CD4-positive, alpha-beta T cell (primary cell): ENCODE measurements at regions of chr6 and their contacts with region 1.

Region 1: DNA sequence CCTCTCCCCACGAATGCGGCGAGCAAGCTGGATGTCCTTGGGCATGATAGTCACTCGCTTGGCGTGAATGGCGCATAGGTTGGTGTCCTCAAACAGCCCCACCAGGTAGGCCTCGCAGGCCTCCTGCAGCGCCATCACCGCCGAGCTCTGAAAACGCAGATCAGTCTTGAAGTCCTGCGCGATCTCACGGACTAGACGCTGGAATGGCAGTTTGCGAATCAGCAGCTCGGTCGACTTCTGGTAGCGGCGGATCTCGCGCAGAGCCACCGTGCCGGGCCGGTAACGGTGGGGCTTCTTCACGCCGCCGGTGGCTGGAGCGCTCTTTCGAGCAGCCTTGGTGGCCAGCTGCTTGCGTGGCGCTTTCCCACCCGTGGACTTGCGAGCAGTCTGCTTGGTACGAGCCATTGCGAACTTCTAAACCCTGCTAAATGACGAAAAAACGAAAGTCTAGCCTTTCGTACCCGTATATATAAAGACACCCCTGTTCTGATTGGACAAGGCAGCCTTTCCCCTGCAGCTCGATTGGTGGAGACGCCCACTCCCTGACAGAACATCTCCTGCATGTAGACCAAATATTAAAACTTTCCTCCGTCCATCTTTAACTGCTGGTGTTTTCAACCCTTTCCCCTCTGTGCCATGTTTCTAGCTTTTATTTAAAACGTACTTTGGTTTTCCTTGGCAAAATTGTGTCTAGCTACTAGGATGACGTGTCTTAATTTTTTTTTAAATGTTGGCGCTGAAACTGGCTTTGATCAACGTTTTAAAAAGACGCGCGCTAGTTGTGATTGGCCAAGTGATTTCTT is 109.8 kb downstream of the HFE start:
- DNase-seq: peak; percentile 60 to 97 (median 70)
- ATAC-seq: peak; percentile 55
- H3K4me3 ChIP-seq: peak overlapping the region; percentile 75
- H3K4me3 Mint-ChIP-seq: peak overlapping the region; percentile 94
- H3K27ac ChIP-seq: peak overlapping the region; percentile 81 to 87
- H3K27ac Mint-ChIP-seq: peak overlapping the region; percentile 97
- H3K4me1 ChIP-seq: peaks cover 26% of the 10 kb centered on the region
- H3K4me1 Mint-ChIP-seq: peaks cover 57% of the 10 kb centered on the region
- H3K27me3 ChIP-seq: no peaks in the 10 kb centered on the region
- H3K27me3 Mint-ChIP-seq: no peaks in the 10 kb centered on the region
- CTCF ChIP-seq: no peak

Region 2: GRCh38 chr6:24344980-24345379 is 1852.1 kb before region 1 on chr6:
- CTCF ChIA-PET with region 1: no interaction called
- POLR2A ChIA-PET with region 1: no interaction called
- intact Hi-C with region 1: no loop called
- DNase-seq: no peak
- ATAC-seq: no peak
- H3K4me3 ChIP-seq: no peak overlapping the region
- H3K4me3 Mint-ChIP-seq: no peak overlapping the region
- H3K27ac ChIP-seq: no peak overlapping the region
- H3K27ac Mint-ChIP-seq: no peak overlapping the region
- H3K4me1 ChIP-seq: no peaks in the 10 kb centered on the region
- H3K4me1 Mint-ChIP-seq: no peaks in the 10 kb centered on the region
- H3K27me3 ChIP-seq: peaks cover 5 to 9% of the 10 kb centered on the region in 2 experiments
- H3K27me3 Mint-ChIP-seq: peaks cover 51% of the 10 kb centered on the region
- CTCF ChIP-seq: no peak

Region 3: DNA sequence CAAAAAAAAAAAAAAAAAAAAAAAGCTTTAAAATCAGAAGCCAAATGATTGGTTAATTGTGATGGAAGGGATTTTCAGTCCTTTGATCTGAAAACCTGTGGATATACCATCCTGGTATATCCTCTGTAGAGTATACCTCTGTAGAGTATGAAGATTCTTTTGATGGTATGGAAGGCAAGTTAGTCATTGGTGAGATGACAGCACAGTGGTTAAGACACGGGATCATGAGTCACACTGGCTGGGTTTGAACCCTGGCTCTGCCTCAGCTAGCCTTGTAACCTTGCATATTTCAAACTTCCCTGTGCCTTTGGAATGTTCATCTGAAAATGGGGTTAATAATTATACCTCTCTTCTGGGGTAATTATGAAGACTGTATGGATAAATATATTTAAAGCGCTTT is 738.6 kb before region 1 on chr6:
- CTCF ChIA-PET with region 1: no interaction called
- POLR2A ChIA-PET with region 1: no interaction called
- intact Hi-C with region 1: no loop called
- DNase-seq: peak in 3 of 14 experiments; percentile 4 to 36 (median 32)
- ATAC-seq: no peak
- H3K4me3 ChIP-seq: no peak overlapping the region
- H3K4me3 Mint-ChIP-seq: no peak overlapping the region
- H3K27ac ChIP-seq: no peak overlapping the region
- H3K27ac Mint-ChIP-seq: no peak overlapping the region
- H3K4me1 ChIP-seq: no peaks in the 10 kb centered on the region
- H3K4me1 Mint-ChIP-seq: no peaks in the 10 kb centered on the region
- H3K27me3 ChIP-seq: no peaks in the 10 kb centered on the region
- H3K27me3 Mint-ChIP-seq: no peaks in the 10 kb centered on the region
- CTCF ChIP-seq: no peak

Region 4: DNA sequence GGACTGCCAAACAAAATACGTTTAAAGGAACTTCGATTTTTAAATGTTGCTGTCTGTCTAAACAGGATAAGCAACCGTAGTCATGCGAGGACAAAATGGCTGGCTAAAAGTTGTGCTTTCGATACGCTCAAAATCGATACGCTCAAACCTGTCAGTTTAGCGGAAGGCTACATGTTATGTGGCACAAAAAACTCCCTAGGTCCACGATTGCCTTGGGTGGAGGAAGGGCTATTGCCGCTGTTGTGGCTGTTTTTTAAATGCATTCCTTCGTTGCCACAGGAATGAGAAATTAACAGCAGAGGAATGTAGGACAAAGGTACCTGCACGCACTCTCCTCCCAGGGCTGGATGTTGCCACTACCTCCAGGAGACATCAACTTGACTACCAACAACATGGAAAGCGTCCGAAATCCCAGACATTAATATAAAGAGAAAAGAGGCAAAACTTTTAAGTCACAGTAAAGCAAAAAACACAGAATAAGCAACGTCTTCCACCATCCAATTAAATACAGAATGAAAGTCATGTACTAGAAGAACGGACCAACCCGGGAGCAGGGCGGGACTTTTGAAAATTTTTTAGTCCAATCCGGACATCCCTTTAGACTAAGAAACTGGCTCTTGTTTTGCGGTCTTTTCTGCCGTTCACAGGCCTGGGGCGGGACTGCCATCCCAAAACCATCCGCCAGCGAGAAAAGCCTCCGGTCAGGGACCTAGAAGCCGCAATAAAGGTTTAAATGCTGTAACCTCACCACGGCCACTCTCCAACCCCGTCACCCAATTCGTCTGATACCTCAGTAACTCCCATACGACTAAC is 142.0 kb before region 1 on chr6:
- CTCF ChIA-PET with region 1: no interaction called
- POLR2A ChIA-PET with region 1: interaction called, 103 read pairs
- intact Hi-C with region 1: loop called in 1 of 2 experiments (anchors 5 kb)
- DNase-seq: peak; percentile 68 to 97 (median 80)
- ATAC-seq: peak; percentile 71
- H3K4me3 ChIP-seq: peak overlapping the region; percentile 89
- H3K4me3 Mint-ChIP-seq: peak overlapping the region; percentile 97
- H3K27ac ChIP-seq: peak overlapping the region; percentile 81
- H3K27ac Mint-ChIP-seq: peak overlapping the region; percentile 96
- H3K4me1 ChIP-seq: peaks cover 29% of the 10 kb centered on the region
- H3K4me1 Mint-ChIP-seq: peaks cover 28% of the 10 kb centered on the region
- H3K27me3 ChIP-seq: no peaks in the 10 kb centered on the region
- H3K27me3 Mint-ChIP-seq: no peaks in the 10 kb centered on the region
- CTCF ChIP-seq: no peak

Region 5: DNA sequence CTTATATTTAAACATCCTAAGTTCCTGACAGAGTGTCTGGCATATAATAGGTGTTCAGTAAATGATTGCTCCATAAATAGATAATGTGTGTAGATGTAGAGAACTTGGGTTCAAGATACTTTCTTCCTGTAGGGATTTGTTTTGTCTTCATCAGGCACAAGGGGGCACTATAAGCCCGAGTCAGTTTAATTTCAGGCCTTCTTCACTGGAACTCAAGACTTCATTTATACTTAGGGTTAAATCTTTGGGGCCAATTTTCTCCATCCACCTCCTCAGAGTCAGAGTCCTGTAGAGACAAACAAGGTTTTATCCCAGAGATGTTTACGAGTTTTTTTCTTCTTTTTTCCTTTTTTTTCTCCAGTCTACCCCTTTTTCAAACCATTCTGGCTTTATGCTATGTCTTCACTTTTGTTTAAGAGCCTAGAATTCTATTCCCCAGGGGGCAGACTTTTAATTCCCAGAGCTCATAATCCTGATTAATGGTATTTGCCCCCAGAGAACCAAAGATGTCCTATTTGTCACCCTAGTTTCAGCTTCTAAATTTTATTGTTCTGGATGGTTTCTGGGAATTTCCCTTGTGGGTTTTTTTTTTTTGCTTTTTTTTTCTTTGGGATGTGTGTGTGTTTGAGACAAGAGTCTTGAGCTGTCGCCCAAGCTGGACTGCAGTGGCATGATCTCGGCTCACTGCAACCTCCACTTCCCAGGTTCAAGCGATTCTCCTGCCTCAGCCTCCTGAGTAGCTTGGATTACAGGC is 21.4 kb before region 1 on chr6:
- CTCF ChIA-PET with region 1: interaction called, 6 read pairs
- POLR2A ChIA-PET with region 1: interaction called, 418 read pairs
- intact Hi-C with region 1: loop called in 1 of 2 experiments (anchors 2 kb)
- DNase-seq: peak in 11 of 14 experiments; percentile 13 to 85 (median 54)
- ATAC-seq: no peak
- H3K4me3 ChIP-seq: no peak overlapping the region
- H3K4me3 Mint-ChIP-seq: peak overlapping the region; percentile 83
- H3K27ac ChIP-seq: peak overlapping the region in 1 of 2 donors; percentile 41
- H3K27ac Mint-ChIP-seq: peak overlapping the region; percentile 93
- H3K4me1 ChIP-seq: peaks cover 17% of the 10 kb centered on the region
- H3K4me1 Mint-ChIP-seq: peaks cover 53% of the 10 kb centered on the region
- H3K27me3 ChIP-seq: no peaks in the 10 kb centered on the region
- H3K27me3 Mint-ChIP-seq: no peaks in the 10 kb centered on the region
- CTCF ChIP-seq: peak; percentile 87

Region 6: GRCh38 chr6:26249957-26250697 is 53.1 kb after region 1 on chr6:
- CTCF ChIA-PET with region 1: interaction called, 37 read pairs
- POLR2A ChIA-PET with region 1: no interaction called
- intact Hi-C with region 1: no loop called
- DNase-seq: peak; percentile 64 to 93 (median 74)
- ATAC-seq: peak; percentile 78
- H3K4me3 ChIP-seq: peak overlapping the region; percentile 75
- H3K4me3 Mint-ChIP-seq: peak overlapping the region; percentile 97
- H3K27ac ChIP-seq: peak overlapping the region; percentile 72 to 80
- H3K27ac Mint-ChIP-seq: peak overlapping the region; percentile 88
- H3K4me1 ChIP-seq: peaks cover 29% of the 10 kb centered on the region
- H3K4me1 Mint-ChIP-seq: peaks cover 44% of the 10 kb centered on the region
- H3K27me3 ChIP-seq: no peaks in the 10 kb centered on the region
- H3K27me3 Mint-ChIP-seq: no peaks in the 10 kb centered on the region
- CTCF ChIP-seq: no peak

Region 7: DNA sequence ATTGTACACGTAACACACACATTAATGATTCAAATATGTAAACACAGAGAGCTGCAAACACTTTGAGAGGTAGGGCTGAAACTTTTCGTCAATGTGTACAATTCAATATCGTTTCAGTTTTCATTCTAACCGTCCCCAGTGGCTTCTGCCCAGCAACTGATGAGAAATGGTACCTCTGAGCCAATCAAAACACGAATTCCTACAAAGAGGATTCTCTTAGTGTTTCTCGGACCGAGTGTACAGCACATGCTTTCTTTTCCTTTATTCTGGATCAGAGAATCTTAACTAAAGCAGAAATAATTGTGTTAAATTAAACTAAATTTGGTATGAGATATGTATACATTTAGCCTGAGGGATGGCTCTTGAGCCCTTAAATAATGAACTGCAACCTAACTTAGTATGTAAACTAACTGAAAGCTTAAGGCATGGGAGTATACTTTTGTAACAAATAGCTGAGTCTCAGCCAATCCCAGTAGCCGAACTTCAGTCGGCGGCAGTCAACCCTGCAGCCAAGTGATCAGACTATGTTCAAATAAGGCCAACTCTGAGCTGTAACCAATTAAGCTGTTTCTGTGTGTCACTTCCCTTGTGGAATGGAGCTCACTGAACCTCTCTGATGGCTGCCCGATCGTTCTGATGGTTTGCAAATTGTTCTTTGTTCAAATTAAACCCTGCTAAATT is 276.9 kb after region 1 on chr6:
- CTCF ChIA-PET with region 1: no interaction called
- POLR2A ChIA-PET with region 1: interaction called, 18 read pairs
- intact Hi-C with region 1: no loop called
- DNase-seq: peak; percentile 60 to 96 (median 76)
- ATAC-seq: peak; percentile 91
- H3K4me3 ChIP-seq: peak overlapping the region; percentile 56
- H3K4me3 Mint-ChIP-seq: peak overlapping the region; percentile 94
- H3K27ac ChIP-seq: peak overlapping the region; percentile 85 to 90
- H3K27ac Mint-ChIP-seq: peak overlapping the region; percentile 99
- H3K4me1 ChIP-seq: peaks cover 45% of the 10 kb centered on the region
- H3K4me1 Mint-ChIP-seq: peaks cover 64% of the 10 kb centered on the region
- H3K27me3 ChIP-seq: no peaks in the 10 kb centered on the region
- H3K27me3 Mint-ChIP-seq: no peaks in the 10 kb centered on the region
- CTCF ChIP-seq: no peak

Region 8: DNA sequence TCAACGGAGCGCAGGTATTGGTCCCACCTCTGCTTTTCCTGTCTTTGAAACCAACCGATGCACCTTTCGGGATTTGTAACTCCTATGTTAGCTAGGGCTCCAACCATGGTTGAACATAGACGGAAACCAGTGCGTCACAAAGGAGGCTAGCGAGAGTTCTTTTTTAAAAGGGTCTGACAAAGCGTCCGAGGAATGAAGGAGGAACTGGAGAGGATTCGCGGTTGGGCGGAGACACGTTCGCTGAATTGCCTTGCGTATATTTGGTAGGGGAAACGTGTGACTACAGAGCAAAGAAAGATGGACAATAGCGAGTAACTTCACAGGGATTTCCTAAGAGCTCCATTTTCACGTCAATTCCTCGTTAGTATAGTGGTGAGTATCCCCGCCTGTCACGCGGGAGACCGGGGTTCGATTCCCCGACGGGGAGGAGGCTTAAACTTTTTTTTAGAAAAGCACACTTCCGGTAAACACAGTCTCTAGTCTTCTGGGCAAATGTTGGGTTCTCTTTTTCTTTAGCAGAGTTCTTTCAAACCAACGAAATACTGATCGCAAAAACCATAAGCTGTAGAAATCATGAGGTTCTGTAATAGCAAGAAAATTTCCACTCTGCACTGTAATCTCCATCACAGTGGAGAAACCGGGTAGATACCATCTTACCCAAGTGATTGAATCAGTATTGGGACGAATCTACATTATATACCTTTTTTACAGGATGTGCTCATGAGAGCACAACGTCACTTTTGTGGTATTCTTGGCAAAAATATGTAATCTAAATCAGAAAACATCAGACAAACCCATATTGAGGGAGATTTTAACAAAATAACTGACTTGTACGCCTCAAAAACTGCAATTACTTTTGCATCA is 1282.5 kb after region 1 on chr6:
- CTCF ChIA-PET with region 1: no interaction called
- POLR2A ChIA-PET with region 1: interaction called, 22 read pairs
- intact Hi-C with region 1: no loop called
- DNase-seq: peak; percentile 82 to 94 (median 90)
- ATAC-seq: peak; percentile 71
- H3K4me3 ChIP-seq: peak overlapping the region; percentile 62
- H3K4me3 Mint-ChIP-seq: no peak overlapping the region
- H3K27ac ChIP-seq: peak overlapping the region; percentile 93 to 94
- H3K27ac Mint-ChIP-seq: no peak overlapping the region
- H3K4me1 ChIP-seq: peaks cover 16% of the 10 kb centered on the region
- H3K4me1 Mint-ChIP-seq: peaks cover 3% of the 10 kb centered on the region
- H3K27me3 ChIP-seq: no peaks in the 10 kb centered on the region
- H3K27me3 Mint-ChIP-seq: no peaks in the 10 kb centered on the region
- CTCF ChIP-seq: no peak

Region 9: GRCh38 chr6:27871924-27872638 is 1675.0 kb after region 1 on chr6:
- CTCF ChIA-PET with region 1: no interaction called
- POLR2A ChIA-PET with region 1: interaction called, 76 read pairs
- intact Hi-C with region 1: no loop called
- DNase-seq: peak; percentile 71 to 97 (median 82)
- ATAC-seq: peak; percentile 75
- H3K4me3 ChIP-seq: peak overlapping the region; percentile 86
- H3K4me3 Mint-ChIP-seq: peak overlapping the region; percentile 93
- H3K27ac ChIP-seq: peak overlapping the region; percentile 89
- H3K27ac Mint-ChIP-seq: peak overlapping the region; percentile 93
- H3K4me1 ChIP-seq: peaks cover 39% of the 10 kb centered on the region
- H3K4me1 Mint-ChIP-seq: peaks cover 41% of the 10 kb centered on the region
- H3K27me3 ChIP-seq: no peaks in the 10 kb centered on the region
- H3K27me3 Mint-ChIP-seq: no peaks in the 10 kb centered on the region
- CTCF ChIP-seq: peak; percentile 43